Activated naive CD4-positive, alpha-beta T cell treated with anti-CD3 and anti-CD28 coated beads for 36 hours (primary cell): ENCODE measurements at regions of chr12 and their contacts with region 1.

Region 1: DNA sequence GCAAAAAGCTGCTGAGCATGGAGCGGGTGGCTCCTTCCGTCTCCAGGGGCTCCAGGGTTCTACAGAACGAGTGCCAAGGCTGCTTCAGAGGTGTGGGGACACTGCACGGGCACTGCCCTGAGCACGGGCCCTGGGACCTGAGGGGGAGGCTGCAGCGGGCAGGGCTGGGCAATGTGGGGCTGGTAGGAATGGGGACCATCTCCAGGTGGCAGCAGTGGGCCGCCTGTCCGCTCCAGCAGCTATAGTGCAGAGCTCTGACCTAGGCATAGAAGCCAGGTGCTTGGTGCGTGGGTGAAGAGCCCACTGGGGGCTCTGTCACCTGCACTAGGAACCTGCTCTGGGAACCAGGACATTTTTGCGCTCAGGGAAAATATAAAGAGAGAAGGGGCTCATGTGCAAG is 22.3 kb downstream of the HDAC7 start:
- DNase-seq: peak; percentile 55
- H3K4me3 Mint-ChIP-seq: no peak overlapping the region
- H3K27ac Mint-ChIP-seq: peak overlapping the region; percentile 87
- H3K4me1 Mint-ChIP-seq: peaks cover 38% of the 10 kb centered on the region
- H3K27me3 Mint-ChIP-seq: no peaks in the 10 kb centered on the region

Region 2: DNA sequence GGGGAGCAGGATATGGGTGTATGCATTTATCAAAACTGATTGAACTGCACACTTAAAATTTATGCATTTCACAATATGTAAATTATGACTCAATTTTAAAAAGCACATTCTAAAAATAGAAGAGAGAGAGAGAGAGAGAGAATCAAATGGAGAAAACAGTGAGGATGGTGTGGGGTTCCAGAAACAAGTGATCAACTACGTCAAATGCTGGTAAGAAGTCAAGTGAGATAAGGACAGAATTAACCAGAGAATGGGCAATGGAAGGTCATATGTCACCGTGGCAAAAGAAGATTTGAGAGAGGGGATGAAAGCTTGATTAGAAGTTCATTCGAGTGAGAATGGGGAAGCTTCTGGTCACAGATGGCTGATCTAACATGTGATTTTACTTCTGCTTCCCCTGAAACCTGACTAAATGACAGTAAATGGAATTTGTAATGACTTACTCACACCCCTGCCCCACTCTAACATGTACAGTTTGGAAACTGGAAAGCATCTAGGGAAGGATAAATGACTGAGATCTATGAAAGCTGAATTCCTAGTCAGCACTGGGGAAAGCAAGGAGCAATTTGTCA is 441.2 kb before region 1 on chr12:
- CTCF ChIA-PET with region 1: no interaction called
- intact Hi-C with region 1: no loop called
- DNase-seq: peak; percentile 72
- H3K4me3 Mint-ChIP-seq: peak overlapping the region; percentile 64
- H3K27ac Mint-ChIP-seq: peak overlapping the region; percentile 100
- H3K4me1 Mint-ChIP-seq: peaks cover 82% of the 10 kb centered on the region
- H3K27me3 Mint-ChIP-seq: no peaks in the 10 kb centered on the region

Region 3: DNA sequence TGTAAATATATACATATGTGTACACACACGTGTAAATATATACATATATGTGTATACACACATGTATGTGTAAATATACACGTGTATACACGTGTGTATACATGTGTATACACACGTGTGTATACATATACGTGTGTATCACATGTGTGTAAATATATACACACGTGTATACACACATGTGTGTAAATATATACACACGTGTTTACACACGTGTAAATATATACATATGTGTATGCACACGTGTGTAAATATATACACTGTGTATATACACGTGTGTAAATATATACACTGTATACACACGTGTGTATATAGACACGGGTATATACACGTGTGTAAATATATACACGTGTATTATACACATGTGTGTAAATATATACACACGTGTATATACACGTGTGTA is 163.3 kb before region 1 on chr12:
- CTCF ChIA-PET with region 1: no interaction called
- intact Hi-C with region 1: no loop called
- DNase-seq: no peak
- H3K4me3 Mint-ChIP-seq: no peak overlapping the region
- H3K27ac Mint-ChIP-seq: no peak overlapping the region
- H3K4me1 Mint-ChIP-seq: peaks cover 2% of the 10 kb centered on the region
- H3K27me3 Mint-ChIP-seq: no peaks in the 10 kb centered on the region

Region 4: DNA sequence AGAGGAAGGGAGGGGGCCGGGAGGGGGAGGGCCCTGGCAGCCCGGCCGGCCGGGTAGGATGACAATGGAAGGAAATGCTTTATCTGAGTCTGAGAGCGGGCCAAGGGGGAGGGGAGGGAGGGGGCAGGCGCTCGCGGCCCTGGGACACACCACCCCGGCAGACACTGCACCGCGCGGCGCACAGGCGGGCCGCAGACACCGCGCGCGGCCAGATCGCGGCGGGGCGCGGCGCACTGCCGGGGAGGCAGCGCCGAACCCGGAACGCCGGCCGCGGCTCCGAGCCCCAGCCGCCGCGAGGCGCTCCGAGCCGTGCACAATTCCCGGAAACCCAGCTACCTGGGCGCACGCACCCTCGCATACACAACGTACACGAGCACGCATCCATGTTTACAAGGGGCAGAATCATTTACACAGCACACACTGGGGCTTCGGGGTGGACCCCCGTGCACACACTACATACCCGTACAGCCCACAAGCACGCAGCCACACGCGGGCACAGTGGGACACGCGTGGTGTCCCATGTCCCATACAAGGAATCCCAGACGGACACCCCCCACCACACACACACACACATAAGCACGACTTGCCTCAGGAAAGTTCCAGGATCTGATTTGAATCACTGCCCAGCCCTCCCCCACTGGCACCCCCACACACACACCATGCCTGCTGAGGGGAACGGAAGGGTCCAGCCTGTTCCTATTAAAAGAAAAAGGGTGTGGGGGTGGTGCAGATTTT is 22.6 kb after region 1 on chr12 and contains the start of gene HDAC7:
- CTCF ChIA-PET with region 1: interaction called, 20 read pairs
- intact Hi-C with region 1: loop called (anchors 1 kb)
- DNase-seq: peak; percentile 82
- H3K4me3 Mint-ChIP-seq: peak within 1 kb of the TSS; percentile 95
- H3K27ac Mint-ChIP-seq: peak within 1 kb of the TSS; percentile 99
- H3K4me1 Mint-ChIP-seq: peaks cover 63% of the 10 kb centered on the region
- H3K27me3 Mint-ChIP-seq: no peaks in the 10 kb centered on the region
- total RNA-seq, gene HDAC7: 272 to 289 TPM